Activated CD4-positive, alpha-beta T cell treated with anti-CD3 and anti-CD28 coated beads for 36 hours (primary cell): ENCODE measurements at regions of chr11 and their contacts with region 1.

Region 1: GRCh38 chr11:57530596-57531507 is at the start of gene TIMM10:
- DNase-seq: peak; percentile 97
- ATAC-seq: peak; percentile 95
- H3K4me3 Mint-ChIP-seq: peak within 1 kb of the TSS; percentile 81
- H3K27ac Mint-ChIP-seq: peak within 1 kb of the TSS; percentile 87
- H3K4me1 Mint-ChIP-seq: peaks cover 37% of the 10 kb centered on the region
- H3K27me3 Mint-ChIP-seq: no peaks in the 10 kb centered on the region
- total RNA-seq, gene TIMM10: 124 to 158 TPM

Region 2: DNA sequence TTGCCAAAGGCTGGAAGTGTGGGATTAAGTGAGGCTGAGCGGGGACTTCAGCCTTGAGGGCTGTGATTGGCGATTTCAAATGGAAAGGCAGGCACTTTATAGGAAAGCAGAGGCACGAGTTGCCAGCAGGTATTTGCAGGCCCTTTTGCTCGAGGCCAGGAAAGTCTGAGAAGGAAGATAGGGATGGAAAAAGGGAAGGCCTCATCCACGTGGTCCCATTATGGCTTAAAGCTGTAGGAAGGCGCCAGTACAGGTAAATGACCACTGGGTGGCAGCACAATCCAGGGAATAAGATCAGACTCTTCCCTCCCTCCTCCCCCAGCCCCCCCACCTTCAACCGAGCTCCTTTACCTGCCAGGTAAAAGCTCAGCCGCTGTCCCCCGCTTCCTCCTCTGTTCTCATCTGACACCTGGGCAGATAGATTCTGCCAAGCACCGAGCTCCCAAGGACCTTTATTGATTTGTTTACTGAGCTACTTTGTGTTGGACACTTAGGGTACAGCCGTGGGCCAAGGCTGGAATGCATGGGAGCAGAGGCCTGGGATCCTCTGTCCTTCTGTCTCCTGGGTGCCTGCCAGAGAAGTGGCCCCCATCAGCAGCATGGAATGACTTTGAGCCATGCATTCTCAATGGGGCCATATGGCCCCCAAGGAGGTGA is 185.2 kb before region 1 on chr11:
- CTCF ChIA-PET with region 1: interaction called, 26 read pairs
- POLR2A ChIA-PET with region 1: no interaction called
- intact Hi-C with region 1: loop called (anchors 1 kb)
- DNase-seq: peak; percentile 84
- ATAC-seq: peak; percentile 87
- H3K4me3 Mint-ChIP-seq: no peak overlapping the region
- H3K27ac Mint-ChIP-seq: peak overlapping the region; percentile 52
- H3K4me1 Mint-ChIP-seq: peaks cover 5% of the 10 kb centered on the region
- H3K27me3 Mint-ChIP-seq: no peaks in the 10 kb centered on the region

Region 3: DNA sequence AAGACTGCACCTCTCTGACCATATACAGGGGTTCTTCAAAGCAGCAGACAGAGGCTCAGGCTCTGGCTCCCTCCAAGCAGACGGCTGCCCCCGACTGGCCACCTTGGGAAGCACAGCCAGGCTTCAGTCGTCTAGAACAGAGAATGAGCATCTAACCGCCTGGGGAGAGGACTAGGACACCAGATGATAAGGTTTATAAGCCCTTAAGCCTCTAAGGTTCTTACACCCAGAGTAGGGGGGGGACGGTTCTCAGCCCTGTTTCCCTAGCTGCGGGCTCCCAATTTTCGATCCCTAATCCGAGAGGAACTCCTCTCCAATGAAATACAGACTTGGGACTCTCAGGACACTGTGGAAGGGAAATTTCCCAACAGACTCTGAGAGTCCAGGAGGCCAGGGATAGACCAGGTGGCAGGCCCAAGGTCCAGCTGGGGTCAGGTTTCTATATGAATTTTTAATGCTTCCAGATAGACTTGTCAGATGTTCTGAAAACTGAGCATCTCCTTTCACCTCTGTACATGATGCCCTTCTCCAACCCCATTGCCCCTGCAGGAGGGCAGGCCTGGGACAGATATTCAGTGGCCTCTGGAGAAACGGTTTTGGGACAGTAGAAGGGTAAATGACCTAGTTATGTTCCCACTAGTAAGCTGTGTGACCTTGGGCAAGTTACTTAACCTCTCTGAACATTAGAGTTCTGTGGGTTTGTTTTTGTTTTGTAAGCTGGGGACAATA is 50.3 kb before region 1 on chr11:
- CTCF ChIA-PET with region 1: interaction called, 20 read pairs
- POLR2A ChIA-PET with region 1: no interaction called
- intact Hi-C with region 1: no loop called
- DNase-seq: peak; percentile 90
- ATAC-seq: peak; percentile 69
- H3K4me3 Mint-ChIP-seq: no peak overlapping the region
- H3K27ac Mint-ChIP-seq: no peak overlapping the region
- H3K4me1 Mint-ChIP-seq: peaks cover 15% of the 10 kb centered on the region
- H3K27me3 Mint-ChIP-seq: peaks cover 11% of the 10 kb centered on the region

Region 4: DNA sequence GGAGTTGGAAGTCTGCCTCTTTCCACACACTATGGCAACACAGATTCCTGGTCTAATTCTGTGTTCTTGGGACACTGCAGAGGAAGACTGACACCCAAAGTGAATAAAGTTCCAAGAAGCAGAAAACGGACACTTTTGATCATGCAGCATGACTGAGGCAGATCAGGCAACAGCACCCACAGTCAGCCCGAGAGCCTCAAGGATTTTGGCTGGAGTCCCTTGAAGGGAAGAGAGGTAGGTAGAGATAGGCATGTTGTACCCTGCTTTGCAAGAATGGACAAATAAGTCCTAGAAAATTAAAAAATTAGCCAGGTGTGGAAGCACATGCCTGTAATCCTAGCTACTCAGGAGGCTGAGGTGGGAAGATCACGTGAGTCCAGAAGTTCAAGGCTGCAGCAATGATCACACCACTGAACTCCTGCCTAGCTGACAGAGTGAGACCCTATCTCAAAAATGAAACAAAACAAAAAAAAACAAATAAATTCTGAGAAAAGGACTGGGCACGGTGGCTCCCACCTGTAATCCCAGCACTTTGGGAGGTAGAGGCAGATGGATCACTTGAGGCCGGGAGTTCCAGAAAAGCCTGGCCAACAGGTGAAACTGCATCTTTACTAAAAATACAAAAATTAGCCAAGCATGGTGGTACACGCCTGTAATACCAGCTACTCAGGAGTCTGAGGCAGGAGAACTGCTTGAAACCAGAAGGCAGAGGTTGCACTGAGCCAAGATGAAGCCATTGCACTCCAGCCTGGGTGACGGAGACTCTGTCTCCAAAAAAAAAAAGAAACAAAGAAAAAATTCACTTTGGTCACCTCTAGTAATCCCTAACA is 22.3 kb before region 1 on chr11:
- CTCF ChIA-PET with region 1: interaction called, 100 read pairs
- POLR2A ChIA-PET with region 1: interaction called, 4 read pairs
- intact Hi-C with region 1: no loop called
- DNase-seq: no peak
- ATAC-seq: no peak
- H3K4me3 Mint-ChIP-seq: no peak overlapping the region
- H3K27ac Mint-ChIP-seq: no peak overlapping the region
- H3K4me1 Mint-ChIP-seq: peaks cover 22% of the 10 kb centered on the region
- H3K27me3 Mint-ChIP-seq: no peaks in the 10 kb centered on the region

Region 5: GRCh38 chr11:57644748-57645688 is 114.2 kb after region 1 on chr11:
- CTCF ChIA-PET with region 1: interaction called, 18 read pairs
- POLR2A ChIA-PET with region 1: no interaction called
- intact Hi-C with region 1: no loop called
- DNase-seq: peak; percentile 93
- ATAC-seq: peak; percentile 79
- H3K4me3 Mint-ChIP-seq: no peak overlapping the region
- H3K27ac Mint-ChIP-seq: no peak overlapping the region
- H3K4me1 Mint-ChIP-seq: peaks cover 33% of the 10 kb centered on the region
- H3K27me3 Mint-ChIP-seq: peaks cover 47% of the 10 kb centered on the region

Region 6: DNA sequence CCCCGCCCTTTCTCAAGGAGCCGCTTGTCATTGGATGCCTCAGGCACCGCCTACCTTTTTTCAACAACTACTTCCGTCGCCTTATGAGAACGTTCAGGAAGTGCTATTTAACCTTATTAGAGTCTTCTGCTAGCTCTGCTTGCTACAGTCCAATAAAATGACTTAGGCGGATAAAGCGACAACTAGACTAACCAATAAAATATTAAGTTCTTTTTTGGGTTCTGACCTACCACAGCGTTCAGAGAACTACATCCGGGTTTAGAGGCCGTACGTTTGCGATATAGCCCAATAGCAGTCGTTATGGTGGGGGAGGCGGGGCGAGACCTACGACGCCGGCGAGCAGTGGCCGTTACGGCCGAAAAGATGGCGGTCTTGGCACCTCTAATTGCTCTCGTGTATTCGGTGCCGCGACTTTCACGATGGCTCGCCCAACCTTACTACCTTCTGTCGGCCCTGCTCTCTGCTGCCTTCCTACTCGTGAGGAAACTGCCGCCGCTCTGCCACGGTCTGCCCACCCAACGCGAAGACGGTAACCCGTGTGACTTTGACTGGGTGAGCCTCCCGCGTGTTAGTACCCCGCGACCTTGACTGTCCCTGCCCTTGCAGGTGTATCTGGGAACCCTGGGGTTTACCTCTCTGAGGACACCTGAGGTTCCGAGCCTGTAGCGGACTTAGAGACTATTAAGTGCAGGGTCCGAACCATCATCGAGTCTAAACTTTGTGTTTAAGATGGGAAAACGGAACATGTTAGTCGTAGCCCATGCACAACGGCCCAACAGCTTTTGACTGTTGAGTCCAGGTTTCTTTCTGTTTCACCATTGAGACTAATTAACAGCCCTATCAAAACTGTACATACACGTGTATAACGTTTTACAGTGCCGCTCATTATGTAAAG is 181.7 kb after region 1 on chr11 and contains the start of gene TMX2:
- CTCF ChIA-PET with region 1: interaction called, 4 read pairs
- POLR2A ChIA-PET with region 1: interaction called, 3 read pairs
- intact Hi-C with region 1: loop called (anchors 1 kb)
- DNase-seq: peak; percentile 94
- ATAC-seq: peak; percentile 93
- H3K4me3 Mint-ChIP-seq: peak within 1 kb of the TSS; percentile 97
- H3K27ac Mint-ChIP-seq: peak within 1 kb of the TSS; percentile 97
- H3K4me1 Mint-ChIP-seq: peaks cover 50% of the 10 kb centered on the region
- H3K27me3 Mint-ChIP-seq: no peaks in the 10 kb centered on the region
- total RNA-seq, gene TMX2: 59.8 to 72.5 TPM